ENCODE measurements at regions of chr7 and their contacts with region 1.

Region 1: DNA sequence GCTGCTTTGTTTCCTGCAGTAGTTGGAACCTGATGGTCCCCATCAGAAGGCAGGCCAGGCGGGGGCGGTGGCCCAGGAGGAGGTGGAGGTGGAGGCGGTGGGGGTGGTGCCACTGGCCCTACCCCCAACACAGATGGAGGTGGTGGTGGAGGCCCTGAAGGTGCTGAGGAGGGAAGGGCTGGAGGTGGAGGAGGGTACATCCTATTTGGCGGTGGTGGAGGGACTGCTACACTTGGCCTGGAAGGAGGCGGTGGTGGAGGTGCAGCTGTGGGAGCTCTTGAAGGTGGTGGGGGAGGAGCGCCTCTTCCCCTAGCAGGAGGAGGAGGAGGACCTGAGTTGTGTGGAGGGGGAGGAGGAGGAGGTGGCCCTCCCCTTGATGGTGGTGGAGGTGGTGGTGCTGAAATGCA is 36.8 kb downstream of the LMOD2 start:
- DNase-seq: no peak
- ATAC-seq: no peak
- H3K4me3 Mint-ChIP-seq: no peak overlapping the region
- H3K27ac Mint-ChIP-seq: no peak overlapping the region
- H3K4me1 Mint-ChIP-seq: peaks cover 9% of the 10 kb centered on the region
- H3K27me3 Mint-ChIP-seq: no peaks in the 10 kb centered on the region

Region 2: GRCh38 chr7:123705211-123705901 is 12.9 kb after region 1 on chr7:
- CTCF ChIA-PET with region 1: interaction called, 22 read pairs
- DNase-seq: no peak
- ATAC-seq: no peak
- H3K4me3 Mint-ChIP-seq: no peak overlapping the region
- H3K27ac Mint-ChIP-seq: peak overlapping the region; percentile 3
- H3K4me1 Mint-ChIP-seq: peaks cover 11% of the 10 kb centered on the region
- H3K27me3 Mint-ChIP-seq: no peaks in the 10 kb centered on the region

Region 3: DNA sequence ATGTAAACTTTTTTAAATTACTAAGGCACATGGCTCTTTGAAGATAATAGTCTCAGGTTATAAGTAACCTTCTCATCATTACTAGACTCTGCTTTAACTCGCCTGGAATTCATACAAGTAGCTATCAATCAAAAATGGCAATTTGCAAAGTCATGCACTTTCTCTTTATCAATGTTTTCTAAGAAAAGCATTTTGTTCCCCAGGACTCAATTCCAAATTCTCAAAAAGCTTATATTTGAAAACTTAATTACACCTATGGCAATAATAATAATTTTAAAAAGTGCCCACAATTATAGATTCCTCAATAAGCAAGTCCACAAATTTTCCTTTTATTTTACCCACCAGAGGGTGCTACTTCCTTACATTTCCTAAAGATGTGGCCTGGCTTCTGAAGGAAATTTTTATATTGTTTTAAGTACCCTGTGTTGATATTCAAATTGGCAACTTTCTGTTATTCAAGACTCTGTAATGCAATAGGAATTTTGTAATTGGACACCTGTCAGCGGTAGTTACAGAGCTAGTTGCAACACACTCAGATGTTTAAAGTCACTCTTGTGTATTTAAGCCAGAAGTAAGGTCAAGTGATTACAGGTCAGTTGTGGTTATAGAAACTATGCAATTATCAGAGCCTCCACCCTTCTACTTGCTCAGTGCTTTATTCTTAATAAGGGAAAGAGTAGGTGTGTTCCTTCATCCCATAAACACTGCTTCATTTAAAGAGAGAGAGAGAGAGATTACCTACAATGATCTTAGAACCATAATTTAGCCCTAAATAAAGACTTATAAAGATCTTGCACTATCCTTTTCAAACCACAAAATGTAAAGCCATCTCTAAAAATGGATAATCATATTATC is 105.4 kb after region 1 on chr7:
- CTCF ChIA-PET with region 1: no interaction called
- DNase-seq: no peak
- ATAC-seq: no peak
- H3K4me3 Mint-ChIP-seq: no peak overlapping the region
- H3K27ac Mint-ChIP-seq: no peak overlapping the region
- H3K4me1 Mint-ChIP-seq: no peaks in the 10 kb centered on the region
- H3K27me3 Mint-ChIP-seq: no peaks in the 10 kb centered on the region

Measured in activated CD8-positive, alpha-beta memory T cell treated with anti-CD3 and anti-CD28 coated beads, Interleukin-2, amount 10 ng/mL, durations not matched to agents 7 days and 5 days (primary cell).